H1 (cell line): ENCODE measurements at regions of chr1 and their contacts with region 1.

Region 1: DNA sequence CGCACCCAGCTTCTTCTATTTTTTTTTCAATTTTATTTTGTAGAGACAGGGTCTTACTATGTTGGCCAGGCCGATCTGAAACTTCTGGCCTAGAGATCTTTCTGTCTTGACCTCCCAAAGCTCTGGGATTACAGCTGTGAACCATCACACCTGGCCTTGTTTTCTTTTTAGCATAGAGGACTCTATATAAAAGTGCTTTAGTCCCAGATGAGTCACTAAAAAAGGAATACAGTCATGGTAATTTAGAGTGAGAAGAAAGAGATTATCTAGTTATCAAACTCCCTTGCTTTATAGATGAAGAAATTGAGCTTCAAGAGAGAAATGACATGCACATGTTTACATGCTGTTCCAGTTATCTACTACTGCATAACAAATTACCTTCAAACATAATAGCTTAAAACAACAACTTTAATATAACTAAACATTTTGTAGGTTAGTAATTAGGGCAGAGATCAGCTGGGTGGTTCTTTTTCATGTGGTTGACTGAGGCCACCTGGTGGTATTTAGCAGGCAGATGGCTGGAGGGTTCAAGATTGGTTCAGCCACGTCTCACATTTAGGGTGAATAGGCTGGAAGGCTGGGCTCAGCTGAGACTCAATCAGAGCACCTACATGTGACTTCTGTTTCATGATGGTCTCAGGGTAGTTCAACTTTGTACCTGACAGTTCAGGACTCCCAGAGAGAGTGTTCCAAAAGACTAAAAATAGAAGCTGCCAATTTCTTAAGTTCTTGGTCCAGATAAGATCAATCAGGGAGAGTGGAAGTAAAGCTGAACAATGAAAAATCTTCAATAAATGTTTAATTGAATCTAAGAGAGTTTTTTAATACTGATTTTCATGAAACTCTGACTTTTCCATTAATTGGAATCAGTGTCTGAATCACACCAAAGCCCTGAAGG is 16.9 kb upstream of the MTF2 start:
- DNase-seq: peak in 1 of 2 experiments; percentile 49
- H3K4me3 ChIP-seq: no peak overlapping the region
- H3K27ac ChIP-seq: no peak overlapping the region
- H3K4me1 ChIP-seq: no peaks in the 10 kb centered on the region
- H3K27me3 ChIP-seq: no peaks in the 10 kb centered on the region
- CTCF ChIP-seq: peak; percentile 58 to 78 (median 75)
- EP300 ChIP-seq: no peak
- POLR2A ChIP-seq: no peak
- RAD21 ChIP-seq: peak; percentile 86 to 89

Region 2: GRCh38 chr1:92960395-92961130 is 101.6 kb before region 1 on chr1:
- CTCF ChIA-PET with region 1: interaction called, 11 read pairs
- POLR2A ChIA-PET with region 1: interaction called, 3 read pairs
- DNase-seq: no peak
- H3K4me3 ChIP-seq: peak overlapping the region; percentile 55 to 81 (median 63)
- H3K27ac ChIP-seq: no peak overlapping the region
- H3K4me1 ChIP-seq: peaks cover 0 to 4% (median 1%) of the 10 kb centered on the region in 4 experiments; a peak in 4 of 7 replicates
- H3K27me3 ChIP-seq: peaks cover 0 to 7% (median 2%) of the 10 kb centered on the region in 4 experiments; a peak in 4 of 7 replicates
- CTCF ChIP-seq: peak; percentile 57 to 69 (median 59)
- EP300 ChIP-seq: no peak
- POLR2A ChIP-seq: no peak
- RAD21 ChIP-seq: peak; percentile 55 to 65

Region 3: DNA sequence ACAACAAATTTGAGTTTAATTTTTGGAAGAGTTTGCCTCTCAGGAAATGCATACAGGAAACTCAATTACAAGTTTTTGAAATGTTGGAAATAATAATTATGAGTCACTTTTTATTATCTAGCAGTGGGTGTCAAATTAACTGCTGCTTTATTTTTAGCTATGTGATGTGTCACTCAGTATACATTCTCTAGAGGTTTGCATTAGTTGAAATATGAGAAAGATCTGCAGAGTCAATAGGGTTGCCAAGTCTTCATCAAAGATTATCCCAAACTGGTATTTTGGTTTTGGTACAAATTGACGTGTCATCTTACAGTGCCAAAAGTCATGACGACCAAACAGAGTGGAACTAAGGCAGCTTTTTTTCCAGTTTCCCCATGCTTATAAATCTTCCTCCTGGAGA is 46.6 kb before region 1 on chr1:
- CTCF ChIA-PET with region 1: interaction called, 34 read pairs
- POLR2A ChIA-PET with region 1: interaction called, 3 read pairs
- DNase-seq: no peak
- H3K4me3 ChIP-seq: no peak overlapping the region
- H3K27ac ChIP-seq: no peak overlapping the region
- H3K4me1 ChIP-seq: peaks cover 0 to 4% (median 0%) of the 10 kb centered on the region in 4 experiments; a peak in 3 of 7 replicates
- H3K27me3 ChIP-seq: no peaks in the 10 kb centered on the region
- CTCF ChIP-seq: no peak
- EP300 ChIP-seq: no peak
- POLR2A ChIP-seq: no peak
- RAD21 ChIP-seq: no peak

Region 4: GRCh38 chr1:93021539-93022134 is 40.5 kb before region 1 on chr1:
- CTCF ChIA-PET with region 1: interaction called, 34 read pairs
- POLR2A ChIA-PET with region 1: interaction called, 3 read pairs
- DNase-seq: no peak
- H3K4me3 ChIP-seq: no peak overlapping the region
- H3K27ac ChIP-seq: no peak overlapping the region
- H3K4me1 ChIP-seq: no peaks in the 10 kb centered on the region; a peak in 1 of 7 replicates
- H3K27me3 ChIP-seq: no peaks in the 10 kb centered on the region
- CTCF ChIP-seq: peak in 2 of 3 experiments; percentile 55 to 71; a peak in 2 of 4 replicates
- EP300 ChIP-seq: no peak
- POLR2A ChIP-seq: no peak
- RAD21 ChIP-seq: peak; percentile 82 to 84

Region 5: GRCh38 chr1:93033785-93034184 is 28.4 kb before region 1 on chr1:
- CTCF ChIA-PET with region 1: interaction called, 12 read pairs
- POLR2A ChIA-PET with region 1: no interaction called
- DNase-seq: no peak
- H3K4me3 ChIP-seq: no peak overlapping the region
- H3K27ac ChIP-seq: no peak overlapping the region
- H3K4me1 ChIP-seq: peaks cover 0 to 2% (median 0%) of the 10 kb centered on the region in 4 experiments; a peak in 1 of 7 replicates
- H3K27me3 ChIP-seq: no peaks in the 10 kb centered on the region
- CTCF ChIP-seq: no peak
- EP300 ChIP-seq: no peak
- POLR2A ChIP-seq: no peak
- RAD21 ChIP-seq: no peak

Region 6: GRCh38 chr1:93047618-93048017 is 14.5 kb before region 1 on chr1:
- CTCF ChIA-PET with region 1: interaction called, 22 read pairs
- POLR2A ChIA-PET with region 1: no interaction called
- DNase-seq: no peak
- H3K4me3 ChIP-seq: no peak overlapping the region
- H3K27ac ChIP-seq: no peak overlapping the region
- H3K4me1 ChIP-seq: no peaks in the 10 kb centered on the region
- H3K27me3 ChIP-seq: no peaks in the 10 kb centered on the region
- CTCF ChIP-seq: no peak
- EP300 ChIP-seq: no peak
- POLR2A ChIP-seq: no peak
- RAD21 ChIP-seq: no peak

Region 7: DNA sequence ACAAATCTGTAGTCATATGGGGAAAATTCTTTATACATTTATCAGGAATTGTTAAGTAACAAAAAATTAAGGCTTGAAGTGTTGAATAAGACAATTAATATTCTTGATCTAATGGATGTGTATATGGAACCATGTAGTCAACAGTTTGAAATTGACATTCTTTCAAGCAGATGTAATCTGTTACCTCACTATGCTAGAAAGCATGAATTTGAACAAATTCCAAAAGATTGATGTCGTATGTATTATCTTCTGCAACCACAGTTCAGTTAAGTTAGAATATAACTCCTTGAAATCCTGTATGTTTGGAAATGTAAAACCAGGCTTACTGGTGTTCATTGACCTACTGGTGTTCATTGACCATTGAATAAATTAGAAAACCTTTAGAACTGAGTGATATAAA is 134.4 kb after region 1 on chr1:
- CTCF ChIA-PET with region 1: no interaction called
- POLR2A ChIA-PET with region 1: no interaction called
- DNase-seq: no peak
- H3K4me3 ChIP-seq: no peak overlapping the region
- H3K27ac ChIP-seq: no peak overlapping the region
- H3K4me1 ChIP-seq: no peaks in the 10 kb centered on the region
- H3K27me3 ChIP-seq: no peaks in the 10 kb centered on the region
- CTCF ChIP-seq: no peak
- EP300 ChIP-seq: no peak
- POLR2A ChIP-seq: no peak
- RAD21 ChIP-seq: no peak

Region 8: GRCh38 chr1:93219443-93219842 is 157.3 kb after region 1 on chr1:
- CTCF ChIA-PET with region 1: no interaction called
- POLR2A ChIA-PET with region 1: no interaction called
- DNase-seq: no peak
- H3K4me3 ChIP-seq: no peak overlapping the region
- H3K27ac ChIP-seq: no peak overlapping the region
- H3K4me1 ChIP-seq: no peaks in the 10 kb centered on the region
- H3K27me3 ChIP-seq: no peaks in the 10 kb centered on the region
- CTCF ChIP-seq: no peak
- EP300 ChIP-seq: no peak
- POLR2A ChIP-seq: no peak
- RAD21 ChIP-seq: no peak